Right lobe of liver (tissue), 6 donors: ENCODE measurements at regions of chr11 and their contacts with region 1.

Region 1: DNA sequence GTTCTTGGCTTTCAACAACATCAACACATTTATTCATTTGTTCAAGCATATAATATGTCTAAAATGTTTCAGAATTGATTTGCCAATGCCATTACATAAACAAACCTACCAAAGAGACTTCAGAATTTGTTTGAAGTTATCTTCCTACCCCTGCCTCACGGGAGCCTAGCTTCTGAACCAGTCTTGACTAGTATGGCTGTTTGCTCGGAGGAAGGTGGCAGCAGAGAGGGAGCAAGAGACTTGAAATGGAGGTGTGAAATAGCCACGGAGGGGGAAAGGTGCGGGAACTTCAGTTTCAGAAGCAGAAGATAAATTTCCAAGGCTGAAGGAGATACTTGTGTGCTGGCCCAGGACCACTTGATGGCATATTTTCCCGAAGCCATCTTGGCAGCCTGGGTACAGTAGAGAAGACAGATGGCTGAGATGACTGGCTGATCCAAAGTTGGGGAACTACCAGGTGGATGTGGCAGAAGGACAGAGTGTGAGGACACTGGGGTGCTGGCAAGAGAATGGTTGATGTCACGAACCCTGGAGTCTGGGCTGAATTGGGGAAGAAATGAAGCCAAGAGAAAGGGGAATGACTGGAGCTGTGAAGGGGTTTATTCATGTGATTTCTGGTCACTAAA is 14.0 kb upstream of the MTCH2 start:
- DNase-seq: no peak
- ATAC-seq: no peak
- H3K4me3 ChIP-seq: no peak overlapping the region
- H3K27ac ChIP-seq: no peak overlapping the region
- H3K4me1 ChIP-seq: no peaks in the 10 kb centered on the region
- H3K27me3 ChIP-seq: no peaks in the 10 kb centered on the region
- CTCF ChIP-seq: no peak
- POLR2A ChIP-seq: no peak

Region 2: DNA sequence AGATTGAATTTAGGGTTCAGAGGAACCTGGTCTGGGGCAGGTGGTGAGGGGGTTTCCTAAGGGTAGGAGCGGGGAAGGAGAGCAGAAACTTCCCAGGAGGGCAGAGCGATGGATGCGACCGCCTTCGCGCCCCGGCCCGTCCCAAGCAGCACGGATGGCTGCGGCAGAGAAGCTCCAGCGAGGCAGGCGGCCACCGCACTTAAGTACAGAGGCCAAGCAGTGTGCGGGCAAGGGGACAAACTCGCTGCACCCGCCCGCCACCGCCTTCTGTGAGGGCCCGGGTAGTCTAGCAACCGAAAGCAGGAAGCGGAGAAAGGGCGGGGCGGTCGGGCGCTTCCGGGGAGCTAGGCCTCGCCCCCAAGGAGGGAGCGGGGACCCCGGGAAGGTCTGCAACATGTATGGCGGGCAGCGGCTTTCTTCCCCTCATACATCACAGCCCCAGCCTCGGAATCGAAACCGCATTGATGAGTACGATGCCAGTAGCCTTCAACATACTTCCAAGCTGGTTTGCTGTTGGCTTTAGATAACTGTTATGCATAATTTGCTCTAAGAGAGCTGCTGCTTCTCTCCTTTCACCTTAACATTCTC is 58.8 kb after region 1 on chr11 and contains the start of gene AGBL2:
- intact Hi-C with region 1: loop called in 1 of 2 experiments (anchors 10 kb)
- DNase-seq: peak; percentile 77 to 83 (median 80)
- ATAC-seq: peak; percentile 86 to 94 (median 93)
- H3K4me3 ChIP-seq: peak within 1 kb of the TSS; percentile 89 to 91 (median 89)
- H3K27ac ChIP-seq: peak within 1 kb of the TSS; percentile 25 to 77 (median 73)
- H3K4me1 ChIP-seq: peaks cover 0 to 24% (median 3%) of the 10 kb centered on the region in 4 donors
- H3K27me3 ChIP-seq: no peaks in the 10 kb centered on the region
- CTCF ChIP-seq: no peak
- POLR2A ChIP-seq: peak; percentile 49
- total RNA-seq, gene AGBL2: 0.43 to 5.8 (median 2.1) TPM

Region 3: GRCh38 chr11:47916361-47916871 is 260.0 kb after region 1 on chr11:
- intact Hi-C with region 1: no loop called
- DNase-seq: no peak
- ATAC-seq: peak in 1 of 4 donors; percentile 13
- H3K4me3 ChIP-seq: no peak overlapping the region
- H3K27ac ChIP-seq: no peak overlapping the region
- H3K4me1 ChIP-seq: peaks cover 0 to 8% (median 0%) of the 10 kb centered on the region in 4 donors
- H3K27me3 ChIP-seq: no peaks in the 10 kb centered on the region
- CTCF ChIP-seq: no peak
- POLR2A ChIP-seq: no peak